Activated CD4-positive, alpha-beta memory T cell treated with anti-CD3 and anti-CD28 coated beads for 36 hours (primary cell): ENCODE measurements at regions of chr9 and their contacts with region 1.

Region 1: DNA sequence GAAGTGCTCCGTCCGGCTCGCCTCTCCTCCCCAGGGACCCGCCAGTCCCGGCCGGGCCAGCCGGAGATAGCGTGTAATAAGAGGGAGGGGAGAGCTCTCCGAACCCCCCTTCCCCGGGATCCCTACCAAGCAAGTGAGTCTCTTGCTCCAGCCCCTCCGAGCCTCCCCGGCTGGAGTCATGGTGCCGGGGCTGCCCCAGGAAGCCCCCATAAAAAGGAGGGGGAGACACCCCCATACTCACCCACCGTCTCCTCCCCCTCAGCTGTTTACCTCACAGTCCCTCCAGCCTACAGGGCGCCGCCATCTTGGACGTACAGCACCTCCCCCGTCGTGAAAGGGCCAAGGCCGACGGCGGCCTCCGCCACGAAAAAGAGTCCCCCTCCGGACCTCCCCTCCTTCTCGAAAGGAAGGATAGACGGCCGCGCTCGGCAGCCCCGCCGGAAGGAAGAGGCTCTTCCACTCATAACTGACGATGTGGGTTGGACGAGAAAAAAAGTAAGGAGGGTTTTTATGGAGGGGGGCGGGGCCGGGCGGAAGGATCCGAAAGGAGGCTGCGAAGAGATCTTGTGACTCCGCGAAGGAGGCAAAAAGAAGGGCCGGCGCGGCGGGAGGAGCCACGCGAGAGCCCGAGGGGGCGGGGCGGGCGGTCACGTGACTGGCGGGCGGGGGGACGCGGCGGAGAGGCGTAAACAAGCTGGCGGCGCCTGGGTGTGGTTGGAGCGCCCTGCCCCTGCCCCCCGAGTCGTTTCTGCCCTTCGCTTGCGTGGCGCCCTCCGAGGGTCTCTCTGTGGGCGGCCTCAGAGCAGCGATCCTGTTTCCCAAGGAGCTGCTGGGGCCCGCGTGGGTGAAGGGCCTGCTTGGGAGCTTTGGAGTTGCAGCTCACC is at the start of gene TSC1:
- DNase-seq: peak; percentile 98
- H3K4me3 Mint-ChIP-seq: peak within 1 kb of the TSS; percentile 84
- H3K27ac Mint-ChIP-seq: peak within 1 kb of the TSS; percentile 95
- H3K4me1 Mint-ChIP-seq: peaks cover 26% of the 10 kb centered on the region
- H3K27me3 Mint-ChIP-seq: no peaks in the 10 kb centered on the region
- total RNA-seq, gene TSC1: 19.6 to 23.6 TPM

Region 2: GRCh38 chr9:132877824-132878694 is 66.5 kb before region 1 on chr9 and contains the start of gene AK8:
- CTCF ChIA-PET with region 1: no interaction called
- POLR2A ChIA-PET with region 1: interaction called, 4 read pairs
- intact Hi-C with region 1: loop called (anchors 2 kb)
- DNase-seq: peak; percentile 83
- H3K4me3 Mint-ChIP-seq: peak within 1 kb of the TSS; percentile 73
- H3K27ac Mint-ChIP-seq: peak within 1 kb of the TSS; percentile 8
- H3K4me1 Mint-ChIP-seq: peaks cover 25% of the 10 kb centered on the region
- H3K27me3 Mint-ChIP-seq: no peaks in the 10 kb centered on the region
- total RNA-seq, gene AK8: 0.10 to 0.39 TPM

Region 3: GRCh38 chr9:133030317-133031129 is 86.0 kb after region 1 on chr9 and contains the start of gene GTF3C5:
- CTCF ChIA-PET with region 1: no interaction called
- POLR2A ChIA-PET with region 1: interaction called, 3 read pairs
- intact Hi-C with region 1: loop called (anchors 2 kb)
- DNase-seq: peak; percentile 95
- H3K4me3 Mint-ChIP-seq: peak within 1 kb of the TSS; percentile 99
- H3K27ac Mint-ChIP-seq: peak within 1 kb of the TSS; percentile 90
- H3K4me1 Mint-ChIP-seq: peaks cover 42% of the 10 kb centered on the region
- H3K27me3 Mint-ChIP-seq: no peaks in the 10 kb centered on the region
- total RNA-seq, gene GTF3C5: 80.3 to 81.2 TPM